Sigmoid colon (tissue), 7 donors: ENCODE measurements at regions of chr2 and their contacts with region 1.

Region 1: GRCh38 chr2:17646081-17646554 is 105.6 kb downstream of the VSNL1 start:
- DNase-seq: no peak
- H3K4me3 ChIP-seq: no peak overlapping the region
- H3K27ac ChIP-seq: peak overlapping the region in 1 of 4 donors; percentile 38
- H3K4me1 ChIP-seq: peaks cover 0 to 38% (median 35%) of the 10 kb centered on the region in 4 donors
- H3K27me3 ChIP-seq: no peaks in the 10 kb centered on the region
- CTCF ChIP-seq: peak; percentile 54 to 79 (median 77)
- EP300 ChIP-seq: no peak
- POLR2A ChIP-seq: no peak

Region 2: DNA sequence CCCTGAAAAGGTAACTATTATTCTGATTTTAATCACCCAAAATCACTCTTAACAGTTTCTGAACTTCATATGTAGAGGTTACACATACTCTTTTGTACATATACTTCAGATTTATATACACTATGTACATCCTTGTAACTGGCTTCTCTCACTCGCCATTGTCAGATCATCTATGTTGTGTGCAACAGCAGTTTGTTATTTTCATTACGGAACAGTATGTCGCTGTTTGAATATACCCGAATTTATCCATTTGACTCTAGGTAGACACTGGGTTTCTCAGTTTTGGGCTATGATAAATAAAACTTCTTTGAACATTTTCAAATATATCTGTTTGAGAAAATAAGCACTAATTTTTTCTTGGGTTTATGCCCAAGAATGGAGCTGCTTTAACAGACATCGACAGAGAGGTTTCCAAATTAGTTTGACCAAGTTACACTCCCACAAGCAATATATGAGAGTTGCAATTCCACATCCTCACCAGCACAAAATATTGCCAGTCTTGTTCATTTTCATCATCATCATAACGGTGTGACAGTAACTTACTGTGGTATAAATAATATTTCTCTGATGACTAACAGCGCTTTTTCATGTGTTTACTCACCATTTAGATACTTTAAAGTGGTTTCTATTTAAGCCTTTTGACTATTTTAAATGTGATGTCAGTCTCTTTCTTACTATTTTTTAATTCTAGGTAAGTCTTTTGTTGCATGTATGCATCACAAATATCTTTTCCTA is 26.6 kb after region 1 on chr2:
- intact Hi-C with region 1: loop called (anchors 2 kb)
- DNase-seq: no peak
- H3K4me3 ChIP-seq: no peak overlapping the region
- H3K27ac ChIP-seq: no peak overlapping the region
- H3K4me1 ChIP-seq: no peaks in the 10 kb centered on the region
- H3K27me3 ChIP-seq: no peaks in the 10 kb centered on the region
- CTCF ChIP-seq: no peak
- EP300 ChIP-seq: no peak
- POLR2A ChIP-seq: no peak